ENCODE measurements at regions of chr2 and their contacts with region 1.

Region 1: DNA sequence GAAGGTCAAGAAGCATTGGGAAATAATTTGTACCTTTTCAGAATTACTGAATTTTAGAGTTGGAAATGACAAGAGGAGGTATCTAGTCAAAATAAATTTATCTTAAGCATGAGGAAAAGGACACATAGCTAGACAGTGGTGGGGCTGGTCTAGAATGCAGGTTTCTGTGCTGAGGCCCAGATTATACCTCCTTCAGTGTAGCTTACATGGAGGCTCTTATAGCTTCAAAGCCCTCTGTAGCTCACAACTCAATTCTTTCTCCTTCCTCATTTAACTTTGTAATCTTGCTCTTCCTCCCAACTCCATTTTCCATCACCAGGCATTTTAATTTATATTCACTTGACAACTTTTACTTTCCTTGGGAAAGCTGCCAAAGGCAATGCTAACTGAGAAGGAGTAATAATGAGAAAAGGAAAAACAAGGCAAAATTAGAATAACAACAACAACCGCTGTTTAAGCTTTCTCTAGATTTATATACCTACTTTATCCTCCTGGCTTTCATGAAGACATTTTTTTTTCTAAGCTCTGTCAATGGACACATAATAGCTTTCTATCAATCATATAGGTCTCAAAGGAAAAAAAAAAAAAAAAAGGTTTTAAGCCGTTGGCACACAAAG is 58.5 kb downstream of the CLHC1 start:
- DNase-seq: no peak

Region 2: DNA sequence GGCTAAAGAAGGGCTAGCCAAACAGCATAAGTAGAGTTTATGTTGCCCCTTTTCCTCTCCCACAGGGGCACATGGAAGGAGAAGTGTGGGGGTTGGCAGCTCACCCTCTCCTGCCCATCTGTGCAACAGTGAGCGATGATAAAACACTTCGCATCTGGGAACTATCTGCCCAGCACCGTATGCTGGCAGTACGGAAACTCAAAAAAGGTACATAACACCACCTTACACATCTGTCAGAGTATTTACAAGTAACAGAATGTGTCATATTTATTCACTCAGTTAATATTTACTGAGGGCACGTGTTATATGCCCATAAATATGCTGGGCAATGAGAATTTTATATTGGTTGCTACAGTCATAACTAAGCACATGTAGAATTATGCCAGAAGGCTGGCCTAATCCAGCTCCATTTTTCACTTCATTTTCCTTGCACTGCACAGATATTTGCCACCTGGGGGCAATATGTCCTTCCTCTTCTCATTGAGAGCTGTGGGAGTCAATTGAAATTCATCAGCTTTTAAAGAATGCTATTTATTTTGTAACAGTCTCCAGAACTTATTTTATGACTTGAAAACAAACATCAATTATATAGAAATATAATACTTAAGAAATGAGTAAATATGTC is 273.9 kb before region 1 on chr2:
- intact Hi-C with region 1: loop called in 1 of 2 experiments (anchors 5 kb)
- DNase-seq: no peak

Region 3: GRCh38 chr2:55099878-55100820 is 73.4 kb before region 1 on chr2:
- intact Hi-C with region 1: no loop called
- DNase-seq: no peak